ENCODE measurements at regions of chr17 and their contacts with region 1.

Region 1: GRCh38 chr17:28896884-28897768 is at the start of gene FLOT2:
- DNase-seq: peak; percentile 76
- H3K4me3 ChIP-seq: peak within 1 kb of the TSS; percentile 95
- H3K27ac ChIP-seq: peak within 1 kb of the TSS; percentile 42; the same call in 1 of the 2 replicates
- H3K4me1 ChIP-seq: peaks cover 14% of the 10 kb centered on the region; the same call in 1 of the 2 replicates
- H3K27me3 ChIP-seq: no peaks in the 10 kb centered on the region
- total RNA-seq, gene FLOT2: 28.6 and 33.2 TPM in 2 replicates

Region 2: GRCh38 chr17:27306276-27306835 is 1590.8 kb before region 1 on chr17:
- in situ Hi-C with region 1: no loop called
- DNase-seq: no peak
- H3K4me3 ChIP-seq: no peak overlapping the region
- H3K27ac ChIP-seq: no peak overlapping the region
- H3K4me1 ChIP-seq: 0 out of 2 replicates have a peak, but pooled peaks cover under 1% of the 10 kb centered on the region
- H3K27me3 ChIP-seq: no peaks in the 10 kb centered on the region

Region 3: GRCh38 chr17:28540231-28540630 is 356.9 kb before region 1 on chr17:
- in situ Hi-C with region 1: no loop called
- DNase-seq: no peak
- H3K4me3 ChIP-seq: no peak overlapping the region
- H3K27ac ChIP-seq: no peak overlapping the region
- H3K4me1 ChIP-seq: no peaks in the 10 kb centered on the region
- H3K27me3 ChIP-seq: no peaks in the 10 kb centered on the region

Region 4: GRCh38 chr17:28763804-28764266 is 133.3 kb before region 1 on chr17:
- in situ Hi-C with region 1: loop called (anchors 10 kb)
- DNase-seq: peak; percentile 84
- H3K4me3 ChIP-seq: no peak overlapping the region
- H3K27ac ChIP-seq: no peak overlapping the region
- H3K4me1 ChIP-seq: no peaks in the 10 kb centered on the region
- H3K27me3 ChIP-seq: no peaks in the 10 kb centered on the region